Naive thymus-derived CD4-positive, alpha-beta T cell (primary cell): ENCODE measurements at regions of chr1 and their contacts with region 1.

Region 1: DNA sequence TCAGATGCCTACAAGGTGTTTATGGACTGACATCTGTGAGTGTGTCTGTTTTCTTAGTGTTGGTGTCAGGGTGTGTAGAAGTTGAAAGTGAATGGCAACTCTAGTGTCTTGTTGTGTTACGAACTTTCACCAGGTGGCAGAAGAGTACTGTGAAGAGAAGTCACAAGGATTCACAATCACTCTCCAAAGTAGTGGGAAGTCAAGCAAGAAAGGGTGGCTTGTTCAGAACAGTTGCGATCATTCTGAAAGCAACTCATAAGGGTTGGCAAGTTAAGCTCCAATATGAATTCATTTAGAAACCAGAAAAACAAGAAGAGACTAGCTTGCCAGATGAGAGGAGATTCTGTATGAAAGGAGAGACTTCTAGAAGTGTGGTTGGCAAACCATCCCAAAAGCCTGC is 86.1 kb downstream of the FASLG start:
- DNase-seq: peak in 7 of 9 donors; percentile 44 to 72 (median 65)
- ATAC-seq: peak; percentile 79
- H3K4me3 ChIP-seq: no peak overlapping the region
- H3K4me3 Mint-ChIP-seq: peak overlapping the region in 9 of 10 donors; percentile 2 to 78 (median 63)
- H3K27ac ChIP-seq: no peak overlapping the region
- H3K27ac Mint-ChIP-seq: peak overlapping the region in 6 of 9 donors; percentile 14 to 90 (median 80)
- H3K4me1 ChIP-seq: peaks cover 28 to 38% of the 10 kb centered on the region in 2 donors
- H3K4me1 Mint-ChIP-seq: peaks cover 31 to 58% (median 54%) of the 10 kb centered on the region in 7 donors
- H3K27me3 ChIP-seq: no peaks in the 10 kb centered on the region
- H3K27me3 Mint-ChIP-seq: peaks cover 0 to 52% (median 0%) of the 10 kb centered on the region in 5 donors

Region 2: DNA sequence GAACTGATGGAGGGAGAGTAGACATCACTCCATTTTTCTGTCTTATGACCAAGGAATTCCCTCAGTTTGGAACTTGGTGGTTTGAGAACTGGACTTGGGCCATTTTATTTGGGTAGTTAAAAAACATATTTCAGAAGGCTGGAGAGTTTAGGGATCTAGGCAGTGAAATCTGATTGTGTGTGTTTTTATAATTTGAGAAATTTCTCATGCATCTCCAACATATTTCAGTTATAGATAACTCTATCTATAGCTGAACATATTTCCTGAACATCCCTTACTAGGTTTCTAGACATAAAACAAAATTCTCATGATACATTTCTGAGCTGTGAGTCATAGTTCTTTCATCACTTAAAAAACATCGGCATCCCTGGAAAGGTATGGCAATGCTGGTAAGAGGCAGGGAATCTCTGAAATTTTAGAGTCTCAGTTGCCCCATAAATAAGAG is 16.6 kb after region 1 on chr1:
- CTCF ChIA-PET with region 1: interaction called, 19 read pairs
- POLR2A ChIA-PET with region 1: interaction called, 3 read pairs
- intact Hi-C with region 1: loop called in 1 of 2 experiments (anchors 1 kb)
- DNase-seq: no peak
- ATAC-seq: no peak
- H3K4me3 ChIP-seq: no peak overlapping the region
- H3K4me3 Mint-ChIP-seq: no peak overlapping the region
- H3K27ac ChIP-seq: no peak overlapping the region
- H3K27ac Mint-ChIP-seq: no peak overlapping the region
- H3K4me1 ChIP-seq: peaks cover 0 to 25% of the 10 kb centered on the region in 2 donors
- H3K4me1 Mint-ChIP-seq: peaks cover 3 to 58% (median 44%) of the 10 kb centered on the region in 7 donors
- H3K27me3 ChIP-seq: no peaks in the 10 kb centered on the region
- H3K27me3 Mint-ChIP-seq: peaks cover 0 to 28% (median 0%) of the 10 kb centered on the region in 5 donors

Region 3: GRCh38 chr1:172895050-172895460 is 150.0 kb after region 1 on chr1:
- CTCF ChIA-PET with region 1: interaction called, 8 read pairs
- POLR2A ChIA-PET with region 1: no interaction called
- intact Hi-C with region 1: loop called (anchors 2 kb)
- DNase-seq: peak in 7 of 9 donors; percentile 10 to 56 (median 38)
- ATAC-seq: peak; percentile 85
- H3K4me3 ChIP-seq: peak overlapping the region; percentile 41
- H3K4me3 Mint-ChIP-seq: peak overlapping the region; percentile 35 to 87 (median 81)
- H3K27ac ChIP-seq: peak overlapping the region; percentile 55
- H3K27ac Mint-ChIP-seq: peak overlapping the region; percentile 79 to 97 (median 88)
- H3K4me1 ChIP-seq: peaks cover 11 to 21% of the 10 kb centered on the region in 2 donors
- H3K4me1 Mint-ChIP-seq: peaks cover 19 to 58% (median 47%) of the 10 kb centered on the region in 7 donors
- H3K27me3 ChIP-seq: no peaks in the 10 kb centered on the region
- H3K27me3 Mint-ChIP-seq: peaks cover 0 to 39% (median 0%) of the 10 kb centered on the region in 5 donors

Region 4: GRCh38 chr1:173202430-173203145 is 457.6 kb after region 1 on chr1:
- CTCF ChIA-PET with region 1: interaction called, 152 read pairs
- POLR2A ChIA-PET with region 1: interaction called, 11 read pairs
- intact Hi-C with region 1: loop called (anchors 1 kb)
- DNase-seq: peak in 1 of 9 donors; percentile 8
- ATAC-seq: no peak
- H3K4me3 ChIP-seq: no peak overlapping the region
- H3K4me3 Mint-ChIP-seq: peak overlapping the region in 1 of 10 donors; percentile 26
- H3K27ac ChIP-seq: no peak overlapping the region
- H3K27ac Mint-ChIP-seq: peak overlapping the region in 7 of 9 donors; percentile 1 to 99 (median 43)
- H3K4me1 ChIP-seq: peaks cover 32 to 37% of the 10 kb centered on the region in 2 donors
- H3K4me1 Mint-ChIP-seq: peaks cover 28 to 52% (median 46%) of the 10 kb centered on the region in 7 donors
- H3K27me3 ChIP-seq: no peaks in the 10 kb centered on the region
- H3K27me3 Mint-ChIP-seq: peaks cover 0 to 31% (median 0%) of the 10 kb centered on the region in 5 donors

Region 5: DNA sequence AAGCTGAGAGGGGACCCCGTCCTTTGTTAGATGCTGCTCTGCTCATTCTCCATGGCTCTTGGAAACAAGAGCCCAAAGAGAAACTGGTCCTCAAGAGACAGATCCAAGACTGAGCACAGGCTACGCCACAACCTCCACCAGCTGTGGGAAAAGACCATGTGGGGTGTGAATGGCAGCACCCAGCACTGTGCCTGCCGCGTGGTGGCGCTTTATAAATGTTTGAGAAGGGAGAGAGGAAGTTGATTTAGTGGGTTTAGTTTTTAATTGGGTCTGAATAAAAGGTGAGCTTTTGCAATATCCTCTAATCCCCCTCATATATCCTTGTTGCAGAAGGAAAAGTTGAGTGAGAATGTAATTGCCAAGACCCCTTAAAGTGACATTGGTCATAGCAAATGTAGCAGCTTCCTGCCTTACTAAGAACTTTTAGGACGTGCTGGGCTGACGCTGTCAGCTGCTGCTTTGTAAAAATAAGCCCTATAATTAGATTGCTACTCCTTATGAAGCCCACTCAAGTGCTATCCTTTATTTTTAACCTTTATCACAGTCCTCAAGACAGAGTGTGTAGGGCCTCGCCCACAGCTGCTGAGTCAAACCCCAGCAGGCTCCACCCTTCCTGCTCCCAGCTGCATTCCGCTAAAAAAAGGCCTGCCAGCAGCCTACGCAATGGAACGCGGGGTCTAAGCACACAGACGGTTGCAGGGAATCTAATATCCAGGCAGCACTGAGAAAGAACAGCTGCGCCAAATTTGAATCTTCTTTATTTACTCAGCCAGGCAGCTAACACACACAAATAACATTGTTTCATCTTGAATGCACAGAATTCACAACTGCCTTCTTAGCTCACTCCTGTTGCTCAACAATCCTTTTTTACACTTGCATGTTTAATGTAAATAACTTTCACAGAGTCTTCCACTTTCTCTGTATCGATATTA is 684.7 kb after region 1 on chr1:
- CTCF ChIA-PET with region 1: interaction called, 12 read pairs
- POLR2A ChIA-PET with region 1: interaction called, 3 read pairs
- intact Hi-C with region 1: loop called in 1 of 2 experiments (anchors 1 kb)
- DNase-seq: peak; percentile 36 to 66 (median 54)
- ATAC-seq: peak; percentile 87
- H3K4me3 ChIP-seq: peak overlapping the region; percentile 9
- H3K4me3 Mint-ChIP-seq: peak overlapping the region; percentile 29 to 76 (median 60)
- H3K27ac ChIP-seq: peak overlapping the region; percentile 43
- H3K27ac Mint-ChIP-seq: peak overlapping the region; percentile 23 to 86 (median 51)
- H3K4me1 ChIP-seq: peaks cover 14% of the 10 kb centered on the region in 2 donors
- H3K4me1 Mint-ChIP-seq: peaks cover 13 to 35% (median 24%) of the 10 kb centered on the region in 7 donors
- H3K27me3 ChIP-seq: no peaks in the 10 kb centered on the region
- H3K27me3 Mint-ChIP-seq: no peaks in the 10 kb centered on the region

Region 6: GRCh38 chr1:173867753-173868265 is 1122.8 kb after region 1 on chr1 and contains the start of gene GAS5:
- CTCF ChIA-PET with region 1: no interaction called
- POLR2A ChIA-PET with region 1: no interaction called
- intact Hi-C with region 1: loop called in 1 of 2 experiments (anchors 1 kb)
- DNase-seq: peak; percentile 88 to 100 (median 99)
- ATAC-seq: peak; percentile 92
- H3K4me3 ChIP-seq: peak within 1 kb of the TSS; percentile 88
- H3K4me3 Mint-ChIP-seq: peak within 1 kb of the TSS; percentile 92 to 98 (median 95)
- H3K27ac ChIP-seq: peak within 1 kb of the TSS; percentile 93
- H3K27ac Mint-ChIP-seq: peak within 1 kb of the TSS; percentile 85 to 99 (median 97)
- H3K4me1 ChIP-seq: peaks cover 42 to 62% of the 10 kb centered on the region in 2 donors
- H3K4me1 Mint-ChIP-seq: peaks cover 50 to 80% (median 66%) of the 10 kb centered on the region in 7 donors
- H3K27me3 ChIP-seq: no peaks in the 10 kb centered on the region
- H3K27me3 Mint-ChIP-seq: peaks cover 0 to 4% (median 0%) of the 10 kb centered on the region in 5 donors
- total RNA-seq, gene GAS5: 371 to 954 (median 885) TPM

Region 7: DNA sequence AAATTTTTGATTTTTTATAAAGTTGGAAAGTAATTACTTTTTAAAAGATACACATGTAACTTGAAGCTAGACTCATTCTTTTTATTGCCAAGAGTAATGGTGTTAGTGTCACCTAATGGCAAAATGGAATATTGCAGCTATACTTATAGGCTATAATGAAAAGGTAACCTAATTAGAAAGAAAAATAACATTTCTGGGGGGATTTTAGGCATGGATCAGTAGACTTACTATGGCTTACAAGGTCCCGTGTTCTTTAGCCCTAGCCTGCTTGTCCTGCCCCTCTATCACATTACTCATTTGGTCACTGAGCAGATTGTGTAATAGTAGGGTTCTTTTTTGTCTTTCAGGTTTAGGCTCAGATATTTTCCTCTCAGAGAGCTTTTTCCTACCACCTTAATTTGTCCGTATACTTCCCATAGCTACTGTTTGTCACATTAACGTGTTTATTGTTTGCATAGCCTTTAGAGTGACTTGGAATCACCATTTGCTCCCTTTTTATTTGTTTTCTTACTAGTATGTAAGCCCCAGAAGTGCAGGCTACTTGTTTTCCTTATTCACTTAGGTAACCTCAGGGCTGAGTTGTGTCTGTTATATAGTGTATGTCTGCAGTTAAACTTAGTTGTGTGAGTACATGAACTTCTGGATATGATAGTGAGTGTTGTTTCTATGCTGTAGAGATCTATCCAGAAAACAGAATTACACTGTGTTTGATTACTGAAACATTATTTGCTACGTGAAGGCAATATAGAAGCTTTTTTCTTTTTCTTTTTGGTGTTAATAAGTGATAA is 1473.0 kb after region 1 on chr1:
- CTCF ChIA-PET with region 1: interaction called, 4 read pairs
- POLR2A ChIA-PET with region 1: no interaction called
- intact Hi-C with region 1: loop called in 1 of 2 experiments (anchors 1 kb)
- DNase-seq: peak in 6 of 9 donors; percentile 2 to 46 (median 34)
- ATAC-seq: peak; percentile 69
- H3K4me3 ChIP-seq: no peak overlapping the region
- H3K4me3 Mint-ChIP-seq: no peak overlapping the region
- H3K27ac ChIP-seq: no peak overlapping the region
- H3K27ac Mint-ChIP-seq: no peak overlapping the region
- H3K4me1 ChIP-seq: no peaks in the 10 kb centered on the region
- H3K4me1 Mint-ChIP-seq: peaks cover 0 to 8% (median 0%) of the 10 kb centered on the region in 7 donors
- H3K27me3 ChIP-seq: no peaks in the 10 kb centered on the region
- H3K27me3 Mint-ChIP-seq: no peaks in the 10 kb centered on the region